Mammary epithelial cell (primary cell): ENCODE measurements at regions of chr22 and their contacts with region 1.

Region 1: DNA sequence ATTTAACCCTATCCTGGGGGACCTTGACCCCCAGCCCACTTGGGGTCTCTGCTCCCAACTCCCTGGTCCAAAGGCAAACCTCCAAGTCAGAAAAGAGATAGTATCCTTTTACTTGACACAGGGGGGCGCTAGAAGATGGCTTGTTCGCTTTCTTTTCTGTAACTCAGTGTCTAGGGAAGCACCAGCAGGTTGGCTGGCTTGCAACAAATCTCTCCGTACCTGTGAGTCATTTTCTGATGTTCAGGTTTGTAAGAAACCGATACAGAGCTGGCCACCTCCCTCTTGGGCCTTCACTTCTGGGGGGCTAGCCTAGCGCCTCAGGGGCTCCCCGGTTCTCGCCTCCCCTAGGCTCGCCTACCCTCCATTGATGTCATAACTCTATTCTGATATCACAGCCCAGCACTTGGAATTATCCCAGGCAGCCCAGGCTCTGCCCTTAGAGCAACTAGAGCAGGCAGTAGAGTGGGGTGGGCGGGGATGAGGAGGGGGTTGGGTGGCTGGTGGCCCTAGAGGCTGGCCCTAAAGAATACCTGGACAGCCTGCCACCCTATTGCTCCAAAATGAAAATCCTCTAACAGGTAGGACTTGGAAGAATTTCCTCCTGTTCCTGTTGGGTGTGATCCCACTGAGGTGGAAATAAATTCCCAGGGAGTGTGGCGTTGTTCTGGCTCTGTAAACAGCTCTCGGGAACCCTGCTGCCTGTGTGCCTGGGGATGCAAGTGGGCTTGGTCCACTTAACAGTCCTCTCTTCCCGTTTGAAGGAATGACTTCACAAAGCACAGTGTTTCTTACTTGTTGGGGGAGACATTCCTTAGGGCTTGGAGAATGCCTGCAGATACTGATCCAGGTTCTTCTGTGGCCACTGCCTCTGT is 69.4 kb downstream of the OSBP2 start:
- DNase-seq: peak; percentile 83
- H3K4me3 ChIP-seq: no peak overlapping the region
- H3K27ac ChIP-seq: peak overlapping the region; percentile 6
- H3K4me1 ChIP-seq: peaks cover 3% of the 10 kb centered on the region
- H3K27me3 ChIP-seq: no peaks in the 10 kb centered on the region
- CTCF ChIP-seq: peak; percentile 59 to 77

Region 2: DNA sequence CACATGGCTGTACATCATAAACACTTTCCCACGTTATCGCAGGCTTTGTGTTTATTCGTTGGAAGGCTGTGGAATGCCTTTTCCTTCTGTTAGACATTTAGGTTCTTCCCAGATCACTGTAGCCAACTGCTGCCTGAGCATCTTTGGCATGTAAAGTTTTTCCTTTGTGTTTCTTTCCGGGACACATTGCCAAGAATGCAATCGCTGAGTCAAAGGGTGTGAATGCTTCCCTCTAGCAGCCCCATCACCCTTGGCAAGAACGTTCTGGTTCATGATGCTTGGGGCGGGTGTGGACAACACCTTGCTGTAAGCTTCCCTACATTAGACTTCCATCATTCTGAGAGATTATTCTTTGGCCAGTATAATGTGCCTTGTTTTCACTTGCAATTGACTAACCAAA is 66.9 kb after region 1 on chr22:
- CTCF ChIA-PET with region 1: no interaction called
- dilution Hi-C with region 1: loop called (anchors 5 kb)
- in situ Hi-C with region 1: no loop called
- intact Hi-C with region 1: loop called (anchors 1 kb)
- DNase-seq: peak; percentile 97
- H3K4me3 ChIP-seq: no peak overlapping the region
- H3K27ac ChIP-seq: peak overlapping the region; percentile 99
- H3K4me1 ChIP-seq: peaks cover 27% of the 10 kb centered on the region
- H3K27me3 ChIP-seq: no peaks in the 10 kb centered on the region
- CTCF ChIP-seq: no peak

Region 3: DNA sequence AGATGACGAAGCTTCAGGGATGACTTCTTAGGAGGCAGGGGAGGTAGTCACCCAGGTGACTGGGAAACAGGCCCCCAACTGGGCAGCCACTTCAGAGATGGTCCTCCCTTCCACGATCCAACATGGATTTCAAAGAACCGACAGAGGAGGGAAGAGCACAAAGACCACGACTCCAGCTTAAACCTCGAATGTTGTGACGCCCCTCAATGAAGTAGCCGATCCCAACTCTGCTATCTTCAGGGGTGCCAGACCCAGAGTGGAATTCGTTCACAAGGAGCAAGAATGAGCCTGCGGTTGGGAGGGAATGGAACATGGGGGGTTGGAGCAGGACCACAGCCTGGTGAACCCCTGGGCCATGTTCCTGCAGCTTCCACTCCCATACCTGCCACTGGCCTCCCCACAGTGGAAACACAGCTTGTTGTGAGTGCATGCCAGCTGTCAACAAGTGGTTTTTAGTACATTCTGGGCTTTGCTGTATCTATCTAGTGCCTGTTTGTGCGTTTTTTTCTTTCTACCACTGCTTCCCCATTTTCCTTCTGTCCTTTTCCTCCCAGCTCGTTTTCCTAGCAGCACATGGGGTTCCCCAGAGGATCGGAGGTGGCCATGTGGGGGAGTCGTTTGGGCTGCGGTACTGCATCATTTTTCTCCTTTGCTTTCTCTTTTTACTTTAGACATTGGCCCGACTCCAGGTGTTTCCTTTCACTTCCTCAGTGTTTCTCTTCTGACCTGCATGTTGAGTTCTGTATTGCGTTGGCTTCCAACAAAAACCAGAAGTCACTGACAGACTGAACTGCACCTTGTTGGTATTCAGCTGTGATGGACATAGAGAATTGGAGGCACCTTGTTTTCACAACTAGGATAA is 138.7 kb after region 1 on chr22:
- CTCF ChIA-PET with region 1: no interaction called
- dilution Hi-C with region 1: loop called (anchors 10 kb)
- in situ Hi-C with region 1: no loop called
- intact Hi-C with region 1: no loop called
- DNase-seq: no peak
- H3K4me3 ChIP-seq: no peak overlapping the region
- H3K27ac ChIP-seq: no peak overlapping the region
- H3K4me1 ChIP-seq: no peaks in the 10 kb centered on the region
- H3K27me3 ChIP-seq: no peaks in the 10 kb centered on the region
- CTCF ChIP-seq: no peak

Region 4: DNA sequence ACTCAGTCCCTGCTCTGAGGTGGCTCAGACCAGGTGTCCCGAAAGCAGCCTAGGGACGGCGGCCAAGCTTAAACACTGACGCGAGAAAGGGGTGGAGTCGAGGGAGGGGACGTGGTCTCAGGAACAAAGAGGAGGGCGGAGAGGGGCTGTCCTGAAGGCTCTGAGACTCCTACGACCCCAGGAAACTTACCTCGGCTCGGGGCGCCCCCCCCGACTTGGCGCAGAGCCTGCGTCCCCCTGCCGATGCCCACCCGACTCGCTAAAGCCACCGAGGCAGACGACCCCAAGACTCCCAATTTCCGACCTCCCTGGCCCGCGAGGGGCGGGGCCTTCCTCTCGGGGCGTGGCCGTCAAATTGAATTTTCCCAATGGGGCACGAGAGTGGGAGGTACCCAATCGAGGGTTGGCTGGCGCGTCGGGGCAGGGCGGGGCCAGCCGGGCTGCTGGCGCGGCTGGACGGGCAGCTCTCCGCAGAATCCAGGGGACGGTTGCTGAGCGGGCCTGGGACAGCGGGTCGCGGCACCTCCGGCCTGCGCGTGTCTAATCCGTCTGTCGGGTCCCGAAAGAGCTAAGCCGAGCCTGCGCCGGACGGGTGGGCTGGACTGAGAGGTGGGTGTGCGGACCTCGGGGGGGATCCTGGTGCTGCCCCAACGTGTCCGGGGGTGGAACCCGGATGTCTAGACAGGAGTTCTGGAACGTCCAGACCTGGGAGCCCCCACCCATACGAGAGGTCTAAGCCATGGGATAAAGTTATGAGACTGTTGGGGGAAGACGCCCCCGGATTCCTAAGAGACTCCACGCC is 317.0 kb after region 1 on chr22 and contains the start of gene SMTN:
- CTCF ChIA-PET with region 1: interaction called, 4 read pairs
- dilution Hi-C with region 1: no loop called
- in situ Hi-C with region 1: loop called in 1 of 2 experiments (anchors 25 kb)
- intact Hi-C with region 1: loop called (anchors 1 kb)
- DNase-seq: peak; percentile 90
- H3K4me3 ChIP-seq: peak within 1 kb of the TSS; percentile 79 to 91 (median 82)
- H3K27ac ChIP-seq: peak within 1 kb of the TSS; percentile 80
- H3K4me1 ChIP-seq: peaks cover 36% of the 10 kb centered on the region
- H3K27me3 ChIP-seq: no peaks in the 10 kb centered on the region
- CTCF ChIP-seq: no peak
- total RNA-seq, gene SMTN: 79.9 to 363 TPM

Region 5: DNA sequence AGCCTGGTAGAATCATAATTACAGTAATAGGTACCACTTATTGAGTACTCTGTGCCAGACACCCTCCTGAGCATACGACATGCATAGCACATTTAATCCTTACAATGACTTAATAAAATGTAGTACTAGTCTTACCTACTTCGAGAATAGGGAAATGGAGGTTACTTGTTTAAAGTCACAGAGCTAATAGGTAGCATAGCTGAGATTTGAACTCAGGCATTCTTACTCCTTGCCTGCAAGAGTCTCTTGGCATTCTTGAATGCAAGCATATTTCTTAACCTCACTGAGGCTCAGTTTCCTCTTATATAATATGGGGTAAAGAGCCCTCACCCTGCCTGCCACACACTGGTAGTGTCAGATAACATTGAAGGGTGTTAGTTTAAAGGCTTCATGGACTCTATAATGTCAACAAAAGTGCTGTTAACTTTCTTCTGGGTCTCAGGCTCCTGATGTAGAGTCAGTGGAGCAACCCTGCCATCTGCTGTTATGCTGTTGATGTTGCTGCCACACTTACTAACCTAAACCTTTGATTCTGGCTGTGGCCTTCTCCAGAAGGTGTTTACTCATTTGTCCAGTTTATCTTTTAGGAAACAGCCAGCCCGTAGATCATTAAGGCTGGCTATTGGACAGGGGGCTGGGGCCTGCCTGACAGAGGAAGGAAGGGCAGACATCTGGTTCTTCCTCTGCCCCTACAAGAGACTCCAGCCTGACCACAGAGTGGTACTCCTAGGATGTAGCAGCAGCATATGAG is 467.0 kb after region 1 on chr22:
- CTCF ChIA-PET with region 1: no interaction called
- dilution Hi-C with region 1: no loop called
- in situ Hi-C with region 1: no loop called
- intact Hi-C with region 1: loop called (anchors 10 kb)
- DNase-seq: peak; percentile 16
- H3K4me3 ChIP-seq: no peak overlapping the region
- H3K27ac ChIP-seq: no peak overlapping the region
- H3K4me1 ChIP-seq: peaks cover 3% of the 10 kb centered on the region
- H3K27me3 ChIP-seq: no peaks in the 10 kb centered on the region
- CTCF ChIP-seq: peak; percentile 43 to 77